Sigmoid colon (tissue), 7 donors: ENCODE measurements at regions of chr4 and their contacts with region 1.

Region 1: GRCh38 chr4:87926554-87927098 is 48.9 kb upstream of the SPP1 start:
- DNase-seq: no peak
- H3K4me3 ChIP-seq: no peak overlapping the region
- H3K27ac ChIP-seq: no peak overlapping the region
- H3K4me1 ChIP-seq: no peaks in the 10 kb centered on the region
- H3K27me3 ChIP-seq: no peaks in the 10 kb centered on the region
- CTCF ChIP-seq: no peak
- EP300 ChIP-seq: no peak
- POLR2A ChIP-seq: no peak

Region 2: GRCh38 chr4:87365343-87365742 is 561.3 kb before region 1 on chr4:
- intact Hi-C with region 1: no loop called
- DNase-seq: no peak
- H3K4me3 ChIP-seq: no peak overlapping the region
- H3K27ac ChIP-seq: no peak overlapping the region
- H3K4me1 ChIP-seq: no peaks in the 10 kb centered on the region
- H3K27me3 ChIP-seq: no peaks in the 10 kb centered on the region
- CTCF ChIP-seq: no peak
- EP300 ChIP-seq: no peak
- POLR2A ChIP-seq: no peak

Region 3: DNA sequence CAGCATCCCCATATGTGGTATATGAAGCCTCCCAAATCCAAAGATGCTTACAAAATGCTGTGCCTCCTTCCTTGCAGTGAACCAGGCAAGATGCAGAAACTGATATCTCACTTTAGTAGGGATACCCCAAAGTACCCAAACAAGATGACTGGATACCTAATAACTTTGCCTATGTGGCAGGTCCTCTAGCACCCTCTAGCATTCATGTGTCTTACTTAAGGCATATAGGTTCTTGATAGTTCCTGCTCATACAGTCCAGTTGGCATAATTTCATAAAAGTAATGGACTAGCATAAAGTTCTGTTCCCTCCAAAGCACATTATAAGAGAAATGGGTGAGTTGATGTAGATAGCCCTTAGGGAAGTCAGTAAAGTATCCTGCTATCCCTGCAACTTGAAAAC is 12.1 kb after region 1 on chr4:
- intact Hi-C with region 1: loop called (anchors 1 kb)
- DNase-seq: no peak
- H3K4me3 ChIP-seq: no peak overlapping the region
- H3K27ac ChIP-seq: no peak overlapping the region
- H3K4me1 ChIP-seq: no peaks in the 10 kb centered on the region
- H3K27me3 ChIP-seq: no peaks in the 10 kb centered on the region
- CTCF ChIP-seq: no peak
- EP300 ChIP-seq: no peak
- POLR2A ChIP-seq: no peak

Region 4: DNA sequence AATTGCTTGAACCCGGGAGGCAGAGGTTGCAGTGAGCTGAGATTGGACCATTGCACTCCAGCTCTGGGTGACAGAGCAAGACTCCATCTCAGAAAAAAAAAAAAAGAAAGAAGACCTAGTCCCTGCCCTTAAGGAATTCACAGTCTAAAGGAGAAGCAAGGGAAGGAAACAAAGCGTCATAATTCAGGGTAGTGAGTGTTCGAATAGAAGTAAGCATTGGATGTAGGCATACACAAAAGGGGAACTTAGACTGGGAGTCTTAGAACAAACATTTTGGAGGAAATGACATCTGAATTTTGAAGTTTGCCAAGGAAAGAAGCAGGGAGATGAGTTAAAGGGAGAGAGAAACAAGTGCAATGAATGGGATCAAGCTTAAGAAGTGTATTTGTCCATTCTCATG is 325.3 kb after region 1 on chr4:
- intact Hi-C with region 1: no loop called
- DNase-seq: no peak
- H3K4me3 ChIP-seq: no peak overlapping the region
- H3K27ac ChIP-seq: no peak overlapping the region
- H3K4me1 ChIP-seq: no peaks in the 10 kb centered on the region
- H3K27me3 ChIP-seq: no peaks in the 10 kb centered on the region
- CTCF ChIP-seq: no peak
- EP300 ChIP-seq: no peak
- POLR2A ChIP-seq: no peak